GM12878 (cell line): ENCODE measurements at regions of chr21 and their contacts with region 1.

Region 1: GRCh38 chr21:42537106-42537742 is 23.6 kb downstream of the SLC37A1 start:
- DNase-seq: no peak
- ATAC-seq: peak; percentile 31
- H3K4me3 ChIP-seq: no peak overlapping the region
- H3K27ac ChIP-seq: no peak overlapping the region; the same call in 1 of the 2 replicates
- H3K4me1 ChIP-seq: peaks cover 51% of the 10 kb centered on the region
- H3K27me3 ChIP-seq: no peaks in the 10 kb centered on the region
- CTCF ChIP-seq: peak; percentile 61 to 82 (median 68)
- EP300 ChIP-seq: peak in 1 of 2 experiments; percentile 49; a peak in 1 of 4 replicates
- POLR2A ChIP-seq: no peak
- RAD21 ChIP-seq: peak; percentile 85

Region 2: GRCh38 chr21:42238185-42238934 is 298.9 kb before region 1 on chr21:
- CTCF ChIA-PET with region 1: interaction called, 11 read pairs
- POLR2A ChIA-PET with region 1: interaction called, 3 read pairs
- RAD21 ChIA-PET with region 1: interaction called, 12 read pairs
- SMC1A ChIA-PET with region 1: interaction called, 6 read pairs
- in situ Hi-C with region 1: loop called (anchors 5 kb)
- intact Hi-C with region 1: loop called (anchors 5 kb)
- DNase-seq: peak; percentile 57
- ATAC-seq: peak; percentile 39
- H3K4me3 ChIP-seq: no peak overlapping the region
- H3K27ac ChIP-seq: peak overlapping the region; percentile 22
- H3K4me1 ChIP-seq: peaks cover 65% of the 10 kb centered on the region
- H3K27me3 ChIP-seq: no peaks in the 10 kb centered on the region
- CTCF ChIP-seq: no peak
- EP300 ChIP-seq: peak; percentile 25 to 39; a peak in 1 of 4 replicates
- POLR2A ChIP-seq: no peak
- RAD21 ChIP-seq: no peak

Region 3: GRCh38 chr21:42337830-42338728 is 199.1 kb before region 1 on chr21:
- CTCF ChIA-PET with region 1: interaction called, 23 read pairs
- POLR2A ChIA-PET with region 1: no interaction called
- RAD21 ChIA-PET with region 1: interaction called, 13 read pairs
- SMC1A ChIA-PET with region 1: interaction called, 7 read pairs
- in situ Hi-C with region 1: no loop called
- intact Hi-C with region 1: no loop called
- DNase-seq: no peak
- ATAC-seq: peak; percentile 90
- H3K4me3 ChIP-seq: no peak overlapping the region
- H3K27ac ChIP-seq: no peak overlapping the region
- H3K4me1 ChIP-seq: peaks cover 13% of the 10 kb centered on the region
- H3K27me3 ChIP-seq: no peaks in the 10 kb centered on the region
- CTCF ChIP-seq: peak; percentile 50 to 62 (median 53)
- EP300 ChIP-seq: no peak
- POLR2A ChIP-seq: no peak
- RAD21 ChIP-seq: peak; percentile 81

Region 4: DNA sequence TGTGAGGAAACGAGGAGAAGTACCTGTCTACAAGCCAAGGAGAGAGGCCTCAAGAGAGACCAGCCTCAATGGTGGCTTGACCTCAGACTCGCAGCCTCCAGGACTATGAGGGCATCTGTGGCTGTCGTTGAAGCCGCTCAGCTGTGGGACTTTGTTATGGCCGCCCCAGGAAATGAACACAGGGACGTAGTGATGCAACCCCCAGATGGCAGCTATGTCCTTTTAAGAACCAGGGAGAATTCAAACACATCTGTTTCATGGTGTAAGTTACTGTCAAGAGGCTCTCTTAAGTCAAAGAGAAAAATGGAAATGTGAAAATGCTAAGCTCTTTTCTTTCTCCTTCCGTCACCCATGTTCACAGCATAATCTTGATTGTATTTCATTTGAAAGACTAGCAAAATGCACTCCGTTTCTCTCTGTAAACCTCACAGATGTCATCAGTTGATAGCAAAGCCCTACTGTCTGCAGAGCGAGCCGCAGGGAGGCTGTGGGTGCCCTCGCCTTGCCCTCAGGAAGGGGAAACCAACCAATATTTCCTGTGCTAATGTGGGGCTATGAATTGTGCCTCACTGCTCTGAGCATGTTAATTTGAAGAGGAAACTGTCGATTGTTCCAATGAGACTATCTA is 112.2 kb before region 1 on chr21:
- CTCF ChIA-PET with region 1: interaction called, 6 read pairs
- POLR2A ChIA-PET with region 1: interaction called, 4 read pairs
- RAD21 ChIA-PET with region 1: interaction called, 10 read pairs
- SMC1A ChIA-PET with region 1: interaction called, 17 read pairs
- in situ Hi-C with region 1: no loop called
- intact Hi-C with region 1: no loop called
- DNase-seq: no peak
- ATAC-seq: peak; percentile 66
- H3K4me3 ChIP-seq: 0 out of 2 replicates have a peak overlapping the region, but pooled peaks have one; percentile 5
- H3K27ac ChIP-seq: peak overlapping the region; percentile 89
- H3K4me1 ChIP-seq: peaks cover 53% of the 10 kb centered on the region
- H3K27me3 ChIP-seq: no peaks in the 10 kb centered on the region
- CTCF ChIP-seq: no peak
- EP300 ChIP-seq: no peak
- POLR2A ChIP-seq: no peak; the same call in 1 of the 2 replicates
- RAD21 ChIP-seq: 0 out of 2 replicates have a peak, but pooled peaks have one; percentile 4

Region 5: DNA sequence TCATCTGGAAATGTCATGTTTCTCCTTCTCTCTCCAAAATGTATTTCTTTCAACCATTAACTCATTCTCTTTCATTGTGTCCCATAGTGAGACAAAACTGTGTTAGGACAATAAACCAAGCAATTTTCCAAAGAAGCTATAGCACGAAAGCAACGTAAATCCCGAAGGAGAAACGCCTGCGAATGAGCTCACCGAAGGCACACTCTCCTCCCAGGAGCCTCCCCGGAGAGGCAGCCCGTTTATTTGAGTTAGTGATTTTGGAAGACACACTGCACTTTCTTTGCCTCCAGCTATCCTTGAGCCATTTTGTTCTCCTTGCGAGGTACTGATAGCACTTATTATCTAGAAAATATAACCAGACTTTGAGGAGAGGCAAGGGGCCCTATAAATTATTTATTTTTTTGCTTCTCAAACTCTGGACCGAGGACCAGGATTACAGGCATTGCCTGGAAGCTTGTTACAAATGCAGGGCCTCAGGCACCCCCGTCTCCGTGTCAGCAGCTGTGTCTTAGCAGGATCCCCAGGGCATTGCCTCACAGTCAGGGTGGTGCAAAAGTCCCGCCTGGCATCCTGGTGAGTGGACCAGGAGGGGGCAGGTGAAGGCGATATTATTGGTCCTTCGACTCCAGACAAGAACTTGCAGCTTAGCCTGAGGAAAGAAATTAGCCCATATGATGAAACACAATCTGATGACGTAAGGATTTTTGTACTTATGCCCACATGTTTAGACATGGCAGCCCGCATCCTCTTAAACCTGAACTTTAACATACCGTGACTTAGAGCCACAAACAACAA is 82.2 kb before region 1 on chr21:
- CTCF ChIA-PET with region 1: interaction called, 117 read pairs
- POLR2A ChIA-PET with region 1: interaction called, 54 read pairs
- RAD21 ChIA-PET with region 1: interaction called, 41 read pairs
- SMC1A ChIA-PET with region 1: interaction called, 268 read pairs
- in situ Hi-C with region 1: no loop called
- intact Hi-C with region 1: no loop called
- DNase-seq: no peak
- ATAC-seq: no peak
- H3K4me3 ChIP-seq: no peak overlapping the region
- H3K27ac ChIP-seq: no peak overlapping the region
- H3K4me1 ChIP-seq: peaks cover 8% of the 10 kb centered on the region
- H3K27me3 ChIP-seq: no peaks in the 10 kb centered on the region
- CTCF ChIP-seq: no peak
- EP300 ChIP-seq: no peak
- POLR2A ChIP-seq: no peak
- RAD21 ChIP-seq: peak; percentile 27; the same call in 1 of the 2 replicates

Region 6: GRCh38 chr21:42474043-42474831 is 63.0 kb before region 1 on chr21:
- CTCF ChIA-PET with region 1: interaction called, 168 read pairs
- POLR2A ChIA-PET with region 1: interaction called, 36 read pairs
- RAD21 ChIA-PET with region 1: interaction called, 146 read pairs
- SMC1A ChIA-PET with region 1: interaction called, 268 read pairs
- in situ Hi-C with region 1: no loop called
- intact Hi-C with region 1: no loop called
- DNase-seq: no peak
- ATAC-seq: peak; percentile 83
- H3K4me3 ChIP-seq: no peak overlapping the region
- H3K27ac ChIP-seq: peak overlapping the region; percentile 20; the same call in 1 of the 2 replicates
- H3K4me1 ChIP-seq: peaks cover 53% of the 10 kb centered on the region
- H3K27me3 ChIP-seq: no peaks in the 10 kb centered on the region
- CTCF ChIP-seq: no peak; a peak in 1 of 6 replicates
- EP300 ChIP-seq: peak; percentile 21 to 71; a peak in 1 of 4 replicates
- POLR2A ChIP-seq: no peak
- RAD21 ChIP-seq: no peak; the same call in 1 of the 2 replicates

Region 7: GRCh38 chr21:42524349-42525151 is 12.7 kb before region 1 on chr21:
- CTCF ChIA-PET with region 1: interaction called, 65 read pairs
- POLR2A ChIA-PET with region 1: interaction called, 71 read pairs
- RAD21 ChIA-PET with region 1: interaction called, 87 read pairs
- SMC1A ChIA-PET with region 1: interaction called, 132 read pairs
- in situ Hi-C with region 1: no loop called
- intact Hi-C with region 1: loop called (anchors 1 kb)
- DNase-seq: peak; percentile 86
- ATAC-seq: peak; percentile 82
- H3K4me3 ChIP-seq: peak overlapping the region; percentile 48
- H3K27ac ChIP-seq: peak overlapping the region; percentile 85
- H3K4me1 ChIP-seq: peaks cover 57% of the 10 kb centered on the region
- H3K27me3 ChIP-seq: no peaks in the 10 kb centered on the region
- CTCF ChIP-seq: no peak
- EP300 ChIP-seq: peak; percentile 80 to 81
- POLR2A ChIP-seq: peak; percentile 38; the same call in 1 of the 2 replicates
- RAD21 ChIP-seq: no peak